Natural killer cell (primary cell): ENCODE measurements at regions of chrX and their contacts with region 1.

Region 1: GRCh38 chrX:120308959-120309872 is 2.0 kb downstream of the TMEM255A start:
- DNase-seq: peak; percentile 64 to 85
- ATAC-seq: peak; percentile 94 to 95 (median 94)
- H3K4me3 ChIP-seq: peak overlapping the region; percentile 45
- H3K4me3 Mint-ChIP-seq: peak overlapping the region; percentile 86
- H3K27ac ChIP-seq: peak overlapping the region; percentile 31
- H3K27ac Mint-ChIP-seq: peak overlapping the region; percentile 88 to 93
- H3K4me1 ChIP-seq: peaks cover 45% of the 10 kb centered on the region
- H3K4me1 Mint-ChIP-seq: peaks cover 34 to 42% of the 10 kb centered on the region in 2 donors
- H3K27me3 ChIP-seq: peaks cover 5% of the 10 kb centered on the region
- H3K27me3 Mint-ChIP-seq: peaks cover 8 to 26% of the 10 kb centered on the region in 2 donors
- CTCF ChIP-seq: peak; percentile 55

Region 2: DNA sequence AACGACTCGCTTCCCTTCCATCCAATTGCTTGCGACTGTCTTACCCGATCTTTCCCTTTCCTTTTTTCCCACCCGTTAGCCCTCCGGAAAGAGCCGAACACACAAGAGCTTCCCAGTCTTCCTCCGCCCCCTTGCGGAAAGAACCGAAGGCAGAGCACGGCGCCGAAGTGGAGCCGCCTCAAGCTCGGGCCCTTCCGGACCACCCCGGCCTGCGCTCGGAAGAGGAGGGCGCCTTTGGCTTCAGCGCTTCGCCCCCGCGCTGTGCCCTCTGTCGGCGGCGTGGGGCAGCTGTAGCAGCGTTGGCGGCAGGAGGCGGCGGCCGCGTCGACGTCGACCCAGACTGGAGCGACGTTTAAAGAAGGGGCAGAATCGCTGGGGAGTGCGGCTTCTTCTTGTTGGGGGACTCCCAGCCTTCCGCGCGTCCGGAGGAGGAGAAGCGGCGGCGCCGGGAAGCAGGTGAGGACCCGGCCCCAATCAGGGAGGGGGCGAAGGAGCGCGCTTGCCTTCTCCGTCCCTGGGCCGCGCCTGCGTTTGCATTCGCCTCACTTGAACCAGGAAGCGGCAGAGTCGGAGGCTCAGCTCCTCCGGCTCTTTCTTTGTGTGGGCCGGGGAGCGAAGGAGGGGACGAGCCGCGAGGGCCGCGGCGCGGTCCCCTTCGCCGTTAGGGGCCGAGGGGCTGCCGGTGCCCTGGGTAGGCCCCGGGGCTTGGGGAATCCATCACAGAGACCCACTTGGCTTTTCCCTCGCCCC is 58.5 kb before region 1 on chrX and contains the start of gene ZBTB33:
- intact Hi-C with region 1: loop called (anchors 1 kb)
- DNase-seq: peak; percentile 75 to 92
- ATAC-seq: peak; percentile 96 to 100 (median 98)
- H3K4me3 ChIP-seq: peak within 1 kb of the TSS; percentile 85
- H3K4me3 Mint-ChIP-seq: peak within 1 kb of the TSS; percentile 99
- H3K27ac ChIP-seq: peak within 1 kb of the TSS; percentile 96
- H3K27ac Mint-ChIP-seq: peak within 1 kb of the TSS; percentile 97 to 99
- H3K4me1 ChIP-seq: no peaks in the 10 kb centered on the region
- H3K4me1 Mint-ChIP-seq: peaks cover 16 to 21% of the 10 kb centered on the region in 2 donors
- H3K27me3 ChIP-seq: no peaks in the 10 kb centered on the region
- H3K27me3 Mint-ChIP-seq: peaks cover 0 to 8% of the 10 kb centered on the region in 2 donors
- CTCF ChIP-seq: peak; percentile 60
- total RNA-seq, gene ZBTB33: 28.6 to 33.3 (median 29.2) TPM

Region 3: GRCh38 chrX:120477453-120477852 is 168.2 kb after region 1 on chrX:
- intact Hi-C with region 1: no loop called
- DNase-seq: no peak
- ATAC-seq: no peak
- H3K4me3 ChIP-seq: no peak overlapping the region
- H3K4me3 Mint-ChIP-seq: no peak overlapping the region
- H3K27ac ChIP-seq: no peak overlapping the region
- H3K27ac Mint-ChIP-seq: no peak overlapping the region
- H3K4me1 ChIP-seq: no peaks in the 10 kb centered on the region
- H3K4me1 Mint-ChIP-seq: no peaks in the 10 kb centered on the region
- H3K27me3 ChIP-seq: no peaks in the 10 kb centered on the region
- H3K27me3 Mint-ChIP-seq: peaks cover 2 to 8% of the 10 kb centered on the region in 2 donors
- CTCF ChIP-seq: no peak